ENCODE measurements at regions of chr17 and their contacts with region 1.

Region 1: DNA sequence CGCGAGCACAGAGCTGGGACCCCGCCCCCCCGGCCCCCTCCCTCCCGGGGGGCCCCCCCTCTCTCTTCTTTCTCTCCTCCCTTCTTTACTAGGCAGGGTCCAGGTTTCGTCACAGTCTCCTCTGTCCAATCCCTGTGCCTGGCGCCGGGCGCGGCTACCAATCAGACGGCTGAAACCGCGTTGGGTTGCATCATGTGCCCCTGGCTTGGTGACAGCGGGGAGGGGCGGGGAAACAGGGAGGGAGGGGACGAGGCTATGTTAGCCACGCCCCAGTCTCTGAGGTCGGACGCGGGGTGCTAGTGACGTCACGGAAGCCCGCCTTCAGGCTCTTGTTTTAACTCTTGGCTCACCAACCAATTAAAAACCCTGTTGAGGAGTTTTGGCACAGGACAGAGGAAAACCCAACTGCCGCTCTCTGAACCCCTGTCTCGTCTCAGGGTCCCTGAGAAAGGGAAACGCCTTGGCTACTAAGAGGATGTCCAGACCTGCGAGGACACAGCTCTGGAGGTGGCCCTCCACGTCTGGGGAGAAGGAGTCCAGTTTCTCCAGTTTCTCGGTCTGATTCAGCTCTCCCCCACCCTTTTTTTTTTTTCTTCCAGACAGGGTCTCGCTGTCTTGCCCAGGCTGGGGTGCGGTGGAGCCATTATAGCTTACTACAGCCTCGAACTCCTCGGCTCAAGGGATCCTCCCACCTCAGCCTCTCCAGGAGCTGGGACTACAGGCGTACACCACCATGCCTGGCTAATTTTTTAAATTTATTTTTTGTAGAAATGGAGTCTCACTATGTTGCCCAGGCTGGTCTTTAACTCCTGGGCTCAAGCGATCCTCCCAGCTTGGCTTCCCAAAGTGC is 439 bp upstream of the PLEKHH3 start:
- DNase-seq: peak; percentile 98
- ATAC-seq: peak; percentile 67
- H3K4me3 ChIP-seq: peak overlapping the region; percentile 97
- H3K27ac ChIP-seq: peak overlapping the region; percentile 89
- H3K4me1 ChIP-seq: peaks cover 41% of the 10 kb centered on the region
- H3K27me3 ChIP-seq: no peaks in the 10 kb centered on the region
- CTCF ChIP-seq: no peak

Region 2: GRCh38 chr17:42527273-42527703 is 149.9 kb before region 1 on chr17:
- CTCF ChIA-PET with region 1: no interaction called
- POLR2A ChIA-PET with region 1: no interaction called
- intact Hi-C with region 1: no loop called
- DNase-seq: peak; percentile 82
- ATAC-seq: peak; percentile 74
- H3K4me3 ChIP-seq: no peak overlapping the region
- H3K27ac ChIP-seq: no peak overlapping the region
- H3K4me1 ChIP-seq: peaks cover 3% of the 10 kb centered on the region; the same call in 1 of the 2 replicates
- H3K27me3 ChIP-seq: no peaks in the 10 kb centered on the region
- CTCF ChIP-seq: peak; percentile 86

Region 3: GRCh38 chr17:42577532-42578281 is 99.5 kb before region 1 on chr17 and contains the start of gene PSMC3IP:
- CTCF ChIA-PET with region 1: interaction called, 16 read pairs
- POLR2A ChIA-PET with region 1: no interaction called
- intact Hi-C with region 1: loop called (anchors 2 kb)
- DNase-seq: peak; percentile 91
- ATAC-seq: peak; percentile 85
- H3K4me3 ChIP-seq: peak within 1 kb of the TSS; percentile 100
- H3K27ac ChIP-seq: peak within 1 kb of the TSS; percentile 70
- H3K4me1 ChIP-seq: peaks cover 13% of the 10 kb centered on the region; the same call in 1 of the 2 replicates
- H3K27me3 ChIP-seq: no peaks in the 10 kb centered on the region
- CTCF ChIP-seq: peak; percentile 45; the same call in 1 of the 2 replicates
- total RNA-seq, gene PSMC3IP: 20.3 and 24.1 TPM in 2 replicates

Region 4: GRCh38 chr17:42609182-42609813 is 67.9 kb before region 1 on chr17 and contains the starts of genes RETREG3 and TUBG1:
- CTCF ChIA-PET with region 1: interaction called, 5 read pairs
- POLR2A ChIA-PET with region 1: no interaction called
- intact Hi-C with region 1: loop called (anchors 5 kb)
- DNase-seq: peak; percentile 97
- ATAC-seq: peak; percentile 88
- H3K4me3 ChIP-seq: peak within 1 kb of the TSS; percentile 98
- H3K27ac ChIP-seq: peak within 1 kb of the TSS; percentile 50
- H3K4me1 ChIP-seq: peaks cover 4% of the 10 kb centered on the region; the same call in 1 of the 2 replicates
- H3K27me3 ChIP-seq: no peaks in the 10 kb centered on the region
- CTCF ChIP-seq: no peak; the same call in 1 of the 2 replicates
- total RNA-seq, gene RETREG3: 19.3 and 21.9 TPM in 2 replicates
- total RNA-seq, gene TUBG1: 97.2 and 114 TPM in 2 replicates

Region 5: DNA sequence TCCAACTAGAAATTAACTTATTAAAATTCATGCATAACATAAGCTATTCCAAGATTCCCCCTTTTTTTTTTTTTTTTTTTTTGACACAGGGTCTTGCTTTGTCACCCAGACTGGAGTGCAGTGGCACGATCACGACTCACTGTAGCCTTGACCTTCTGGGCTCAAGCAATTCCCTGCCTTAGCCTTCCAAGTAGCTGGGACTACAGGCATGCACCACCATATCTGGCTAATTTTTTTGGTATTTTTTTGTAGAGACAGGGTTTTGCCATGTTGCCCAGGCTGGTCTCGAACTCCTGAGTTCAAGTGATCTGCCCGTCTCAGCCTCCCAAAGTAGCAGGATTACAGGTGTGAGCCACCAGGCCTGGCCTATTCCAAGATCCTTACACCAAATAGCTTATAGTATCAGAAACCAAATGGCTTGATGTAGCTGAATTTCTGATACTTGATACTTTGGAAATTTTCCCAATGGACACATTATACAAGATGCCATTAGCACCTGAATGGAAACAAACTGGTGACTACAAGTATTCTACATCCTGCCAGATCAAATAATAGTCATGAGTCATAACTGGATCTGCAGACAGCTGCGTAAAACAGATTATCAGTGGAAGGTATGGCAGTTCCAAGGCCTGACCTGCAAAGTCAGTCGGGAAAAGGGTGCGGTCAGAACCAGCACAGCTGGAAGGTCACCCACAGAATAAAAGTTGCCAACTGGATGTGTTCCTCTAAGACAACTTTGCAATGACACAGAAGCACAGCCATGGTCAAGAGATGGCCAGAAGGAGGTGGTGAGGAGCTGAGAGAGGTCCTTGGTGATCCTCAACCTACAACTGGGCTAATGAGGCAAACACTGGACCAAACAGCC is 53.3 kb before region 1 on chr17:
- CTCF ChIA-PET with region 1: interaction called, 3 read pairs
- POLR2A ChIA-PET with region 1: no interaction called
- intact Hi-C with region 1: loop called (anchors 2 kb)
- DNase-seq: peak; percentile 91
- ATAC-seq: peak; percentile 98
- H3K4me3 ChIP-seq: no peak overlapping the region
- H3K27ac ChIP-seq: peak overlapping the region; percentile 28
- H3K4me1 ChIP-seq: peaks cover 12% of the 10 kb centered on the region
- H3K27me3 ChIP-seq: no peaks in the 10 kb centered on the region
- CTCF ChIP-seq: peak; percentile 24; the same call in 1 of the 2 replicates

Region 6: GRCh38 chr17:42660692-42661345 is 16.4 kb before region 1 on chr17:
- CTCF ChIA-PET with region 1: interaction called, 8 read pairs
- POLR2A ChIA-PET with region 1: interaction called, 10 read pairs
- intact Hi-C with region 1: no loop called
- DNase-seq: peak; percentile 77
- ATAC-seq: peak; percentile 66
- H3K4me3 ChIP-seq: no peak overlapping the region
- H3K27ac ChIP-seq: peak overlapping the region; percentile 43
- H3K4me1 ChIP-seq: peaks cover 21% of the 10 kb centered on the region
- H3K27me3 ChIP-seq: no peaks in the 10 kb centered on the region
- CTCF ChIP-seq: no peak